Activated T-helper 2 cell treated with anti-CD3 and anti-CD28 coated beads, Interferon-gamma antibody, Interleukin-2, Interleukin-4, amounts not matched to agents 10 μg/mL and 5 μg/mL and 100 μg/mL, durations not matched to agents 14 hours and 24 hours and 36 hours (primary cell): ENCODE measurements at regions of chr9 and their contacts with region 1.

Region 1: GRCh38 chr9:132079391-132080091 is at the start of gene MED27:
- DNase-seq: peak; percentile 88
- H3K4me3 Mint-ChIP-seq: peak within 1 kb of the TSS; percentile 97
- H3K27ac Mint-ChIP-seq: peak within 1 kb of the TSS; percentile 85
- H3K4me1 Mint-ChIP-seq: peaks cover 36% of the 10 kb centered on the region
- H3K27me3 Mint-ChIP-seq: no peaks in the 10 kb centered on the region
- total RNA-seq, gene MED27: 37.2 TPM in 2 replicates

Region 2: GRCh38 chr9:131839281-131840084 is 240.1 kb before region 1 on chr9:
- intact Hi-C with region 1: loop called (anchors 1 kb)
- DNase-seq: peak; percentile 72
- H3K4me3 Mint-ChIP-seq: peak overlapping the region; percentile 15
- H3K27ac Mint-ChIP-seq: peak overlapping the region; percentile 96
- H3K4me1 Mint-ChIP-seq: peaks cover 15% of the 10 kb centered on the region
- H3K27me3 Mint-ChIP-seq: peaks cover 5% of the 10 kb centered on the region

Region 3: GRCh38 chr9:132006677-132007370 is 72.7 kb before region 1 on chr9:
- intact Hi-C with region 1: loop called (anchors 2 kb)
- DNase-seq: peak; percentile 33
- H3K4me3 Mint-ChIP-seq: no peak overlapping the region
- H3K27ac Mint-ChIP-seq: no peak overlapping the region
- H3K4me1 Mint-ChIP-seq: peaks cover 36% of the 10 kb centered on the region
- H3K27me3 Mint-ChIP-seq: no peaks in the 10 kb centered on the region

Region 4: GRCh38 chr9:132160802-132161742 is 81.5 kb after region 1 on chr9:
- intact Hi-C with region 1: loop called (anchors 1 kb)
- DNase-seq: peak; percentile 60
- H3K4me3 Mint-ChIP-seq: peak overlapping the region; percentile 93
- H3K27ac Mint-ChIP-seq: peak overlapping the region; percentile 87
- H3K4me1 Mint-ChIP-seq: peaks cover 16% of the 10 kb centered on the region
- H3K27me3 Mint-ChIP-seq: peaks cover 51% of the 10 kb centered on the region

Region 5: GRCh38 chr9:132240753-132241493 is 161.4 kb after region 1 on chr9:
- intact Hi-C with region 1: loop called (anchors 5 kb)
- DNase-seq: peak; percentile 98
- H3K4me3 Mint-ChIP-seq: peak overlapping the region; percentile 92
- H3K27ac Mint-ChIP-seq: peak overlapping the region; percentile 75
- H3K4me1 Mint-ChIP-seq: peaks cover 6% of the 10 kb centered on the region
- H3K27me3 Mint-ChIP-seq: peaks cover 30% of the 10 kb centered on the region

Region 6: GRCh38 chr9:132877824-132878694 is 798.5 kb after region 1 on chr9 and contains the start of gene AK8:
- intact Hi-C with region 1: loop called (anchors 5 kb)
- DNase-seq: peak; percentile 72
- H3K4me3 Mint-ChIP-seq: peak within 1 kb of the TSS; percentile 78
- H3K27ac Mint-ChIP-seq: peak within 1 kb of the TSS; percentile 71
- H3K4me1 Mint-ChIP-seq: peaks cover 25% of the 10 kb centered on the region
- H3K27me3 Mint-ChIP-seq: peaks cover 4% of the 10 kb centered on the region
- total RNA-seq, gene AK8: not detected in 2 replicates